GM12878 (cell line): ENCODE measurements at regions of chr3 and their contacts with region 1.

Region 1: GRCh38 chr3:162777111-162777510 is 1280.5 kb downstream of the OTOL1 start:
- DNase-seq: no peak
- ATAC-seq: no peak
- H3K4me3 ChIP-seq: no peak overlapping the region
- H3K27ac ChIP-seq: no peak overlapping the region
- H3K4me1 ChIP-seq: no peaks in the 10 kb centered on the region
- H3K27me3 ChIP-seq: no peaks in the 10 kb centered on the region
- CTCF ChIP-seq: no peak
- EP300 ChIP-seq: no peak
- POLR2A ChIP-seq: no peak
- RAD21 ChIP-seq: no peak

Region 2: DNA sequence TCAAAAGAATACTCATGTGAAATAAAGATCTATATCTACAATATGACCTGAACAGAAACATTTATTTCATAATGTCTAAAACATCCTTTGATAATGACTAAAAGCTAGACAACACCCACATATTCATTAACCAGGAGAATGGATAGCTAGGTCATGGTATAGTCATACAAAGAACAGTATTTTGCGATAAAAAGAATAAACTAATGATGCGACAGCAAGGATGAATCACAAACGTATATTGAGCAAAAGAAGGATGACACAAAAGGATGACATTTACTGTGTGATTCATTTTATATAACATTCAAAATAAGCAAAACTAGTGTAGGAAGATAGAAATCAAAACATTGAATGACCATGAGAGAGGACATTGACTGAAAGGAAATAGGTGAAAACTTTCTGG is 47.4 kb before region 1 on chr3:
- CTCF ChIA-PET with region 1: no interaction called
- POLR2A ChIA-PET with region 1: no interaction called
- RAD21 ChIA-PET with region 1: no interaction called
- SMC1A ChIA-PET with region 1: no interaction called
- in situ Hi-C with region 1: no loop called
- intact Hi-C with region 1: no loop called
- DNase-seq: no peak
- ATAC-seq: no peak
- H3K4me3 ChIP-seq: no peak overlapping the region
- H3K27ac ChIP-seq: no peak overlapping the region
- H3K4me1 ChIP-seq: no peaks in the 10 kb centered on the region
- H3K27me3 ChIP-seq: no peaks in the 10 kb centered on the region
- CTCF ChIP-seq: no peak
- EP300 ChIP-seq: no peak
- POLR2A ChIP-seq: no peak
- RAD21 ChIP-seq: no peak

Region 3: GRCh38 chr3:162897286-162897685 is 120.2 kb after region 1 on chr3:
- CTCF ChIA-PET with region 1: no interaction called
- POLR2A ChIA-PET with region 1: no interaction called
- RAD21 ChIA-PET with region 1: no interaction called
- SMC1A ChIA-PET with region 1: no interaction called
- in situ Hi-C with region 1: loop called (anchors 25 kb)
- intact Hi-C with region 1: no loop called
- DNase-seq: no peak
- ATAC-seq: no peak
- H3K4me3 ChIP-seq: no peak overlapping the region
- H3K27ac ChIP-seq: no peak overlapping the region
- H3K4me1 ChIP-seq: no peaks in the 10 kb centered on the region
- H3K27me3 ChIP-seq: no peaks in the 10 kb centered on the region
- CTCF ChIP-seq: no peak
- EP300 ChIP-seq: no peak
- POLR2A ChIP-seq: no peak
- RAD21 ChIP-seq: no peak